Ovary (tissue), 10 donors: ENCODE measurements at regions of chr7 and their contacts with region 1.

Region 1: GRCh38 chr7:74026903-74027551 is 946 bp upstream of the ELN start:
- DNase-seq: peak; percentile 80 to 92 (median 90)
- H3K4me3 ChIP-seq: peak overlapping the region; percentile 57
- H3K27ac ChIP-seq: peak overlapping the region; percentile 34 to 89
- H3K4me1 ChIP-seq: peaks cover 36% of the 10 kb centered on the region
- H3K27me3 ChIP-seq: no peaks in the 10 kb centered on the region
- CTCF ChIP-seq: peak; percentile 89 to 95 (median 94)
- EP300 ChIP-seq: no peak
- POLR2A ChIP-seq: no peak

Region 2: GRCh38 chr7:73865738-73866445 is 161.1 kb before region 1 on chr7:
- intact Hi-C with region 1: loop called (anchors 5 to 10 kb)
- DNase-seq: peak in 3 of 5 donors; percentile 44 to 67 (median 49)
- H3K4me3 ChIP-seq: no peak overlapping the region
- H3K27ac ChIP-seq: no peak overlapping the region
- H3K4me1 ChIP-seq: peaks cover 1% of the 10 kb centered on the region
- H3K27me3 ChIP-seq: no peaks in the 10 kb centered on the region
- CTCF ChIP-seq: peak in 2 of 3 donors; percentile 10 to 29
- EP300 ChIP-seq: no peak
- POLR2A ChIP-seq: no peak

Region 3: GRCh38 chr7:73894733-73895551 is 132.1 kb before region 1 on chr7:
- intact Hi-C with region 1: loop called in 1 of 4 experiments (anchors 5 kb)
- DNase-seq: peak in 2 of 5 donors; percentile 49 to 62
- H3K4me3 ChIP-seq: no peak overlapping the region
- H3K27ac ChIP-seq: no peak overlapping the region
- H3K4me1 ChIP-seq: peaks cover 4% of the 10 kb centered on the region
- H3K27me3 ChIP-seq: no peaks in the 10 kb centered on the region
- CTCF ChIP-seq: no peak
- EP300 ChIP-seq: no peak
- POLR2A ChIP-seq: no peak

Region 4: DNA sequence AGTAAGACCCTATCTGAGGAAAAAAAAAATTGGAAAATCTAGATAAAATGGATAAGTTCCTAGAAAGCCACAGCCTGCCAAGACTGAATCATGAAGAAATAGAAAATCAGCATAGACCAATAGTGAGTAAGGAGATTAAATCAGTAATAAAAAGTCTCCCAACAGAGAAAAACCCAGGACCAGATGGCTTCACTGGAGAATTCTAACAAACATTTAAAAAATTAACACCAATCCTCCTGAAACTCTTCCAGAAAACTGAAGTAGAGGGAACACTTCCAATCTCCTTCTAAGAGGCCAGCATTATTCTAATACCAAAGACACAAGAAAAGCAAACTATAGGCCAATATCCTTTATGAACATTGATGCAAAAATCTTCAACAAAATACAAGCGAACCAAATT is 47.7 kb after region 1 on chr7:
- intact Hi-C with region 1: loop called in 1 of 4 experiments (anchors 5 kb)
- DNase-seq: no peak
- H3K4me3 ChIP-seq: no peak overlapping the region
- H3K27ac ChIP-seq: no peak overlapping the region
- H3K4me1 ChIP-seq: no peaks in the 10 kb centered on the region
- H3K27me3 ChIP-seq: no peaks in the 10 kb centered on the region
- CTCF ChIP-seq: no peak
- EP300 ChIP-seq: no peak
- POLR2A ChIP-seq: no peak